RWPE1 (cell line): ENCODE measurements at regions of chr19 and their contacts with region 1.

Region 1: DNA sequence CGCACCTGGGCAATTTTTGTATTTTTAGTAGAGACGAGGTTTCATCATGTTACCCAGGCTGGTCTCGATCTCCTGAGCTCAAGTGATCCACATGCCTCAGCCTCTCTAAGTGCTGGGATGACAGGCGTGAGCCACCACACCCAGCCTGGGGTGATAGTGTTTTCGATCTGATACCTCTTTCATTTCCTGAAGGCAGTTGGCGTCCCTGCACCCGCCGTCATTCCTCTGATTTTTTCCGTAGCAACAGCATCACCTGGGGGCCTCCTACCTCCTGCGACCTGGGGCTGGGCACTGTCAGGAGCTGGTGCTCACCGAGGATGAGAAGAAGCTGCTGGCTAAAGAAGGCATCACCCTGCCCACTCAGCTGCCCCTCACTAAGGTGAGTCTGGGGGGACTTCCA is 10.8 kb downstream of the CREB3L3 start:
- DNase-seq: no peak
- H3K27ac ChIP-seq: no peak overlapping the region
- CTCF ChIP-seq: no peak

Region 2: DNA sequence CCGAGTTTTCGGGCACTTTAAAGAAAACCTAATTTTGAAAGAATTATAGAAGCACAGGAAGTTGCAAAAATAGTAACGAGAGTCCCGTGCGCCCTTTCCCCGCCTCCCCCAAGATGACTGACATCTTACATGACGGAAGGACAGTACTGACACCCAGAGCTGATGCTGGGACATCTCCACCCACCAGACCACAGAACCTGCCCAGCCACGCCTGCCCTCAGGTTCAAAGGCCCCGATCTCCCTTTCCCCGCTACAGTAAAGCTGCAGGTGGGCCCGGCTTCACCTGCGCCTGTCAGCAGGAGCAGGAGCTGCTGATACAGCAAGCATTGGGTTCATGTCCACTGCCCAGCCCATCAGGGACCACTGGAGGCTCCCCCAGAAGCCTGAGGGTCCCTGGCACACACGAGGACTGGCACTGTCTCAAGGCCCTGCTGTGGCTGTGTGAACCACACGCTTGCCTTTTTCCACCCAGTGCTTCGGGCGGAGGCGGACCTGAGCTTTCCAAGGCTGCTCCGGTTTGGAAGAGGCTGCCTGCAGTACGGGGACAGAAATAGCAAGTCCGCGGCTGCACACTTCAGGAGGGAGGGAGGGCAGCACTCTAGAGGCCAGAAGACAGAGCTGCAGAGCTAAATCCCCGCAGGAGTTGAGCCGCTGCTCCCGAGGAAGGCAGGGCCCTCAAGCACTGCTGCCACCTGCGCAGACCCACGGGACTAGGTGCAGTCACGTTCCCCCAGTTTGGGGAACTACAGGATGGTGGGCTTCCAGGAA is 49.0 kb before region 1 on chr19:
- CTCF ChIA-PET with region 1: no interaction called
- POLR2A ChIA-PET with region 1: no interaction called
- DNase-seq: no peak
- H3K27ac ChIP-seq: peak overlapping the region; percentile 24
- CTCF ChIP-seq: no peak

Region 3: DNA sequence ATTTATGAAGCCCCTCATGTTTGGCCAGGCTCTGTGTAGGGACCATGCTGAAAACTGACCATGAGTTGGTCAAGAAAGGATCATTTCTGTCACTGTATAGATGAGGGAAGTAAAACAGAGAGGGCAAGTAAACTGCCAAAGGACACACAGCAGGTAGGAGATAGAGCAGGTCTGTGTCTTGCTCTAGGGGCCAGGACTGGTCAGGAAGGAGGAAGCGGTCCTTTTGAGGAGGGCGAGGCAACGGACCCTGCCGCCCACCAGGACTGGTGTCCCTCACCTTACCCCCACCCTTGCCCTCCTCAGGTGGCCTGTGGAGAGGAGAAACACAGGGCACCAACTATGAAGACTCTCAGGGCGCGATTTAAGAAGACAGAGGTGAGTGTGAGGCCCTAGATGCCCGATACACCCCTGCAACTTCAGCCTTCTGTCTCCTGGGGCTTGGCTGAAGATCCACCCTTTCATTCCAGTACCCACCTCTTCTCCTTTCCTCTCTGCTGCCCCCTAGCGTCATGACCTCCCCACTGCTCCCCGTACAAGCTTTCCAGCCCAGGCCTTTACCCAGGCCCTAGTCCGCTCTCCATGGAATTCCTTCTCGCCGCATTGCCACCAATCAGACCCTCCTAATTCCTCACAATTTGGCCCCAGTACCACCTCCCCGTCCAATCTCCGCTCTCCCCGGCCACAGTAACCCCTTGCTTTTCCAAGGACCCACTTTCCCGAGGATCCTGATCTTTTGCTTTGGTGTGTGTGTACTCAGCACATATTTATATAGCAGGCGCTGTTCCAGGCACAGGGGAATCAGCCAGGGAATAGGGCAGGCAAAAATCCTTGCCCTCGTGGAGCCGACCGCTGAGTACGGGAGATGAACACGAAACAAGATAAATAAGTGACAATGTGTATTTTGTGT is 22.1 kb after region 1 on chr19:
- CTCF ChIA-PET with region 1: no interaction called
- POLR2A ChIA-PET with region 1: no interaction called
- DNase-seq: peak; percentile 76
- H3K27ac ChIP-seq: no peak overlapping the region
- CTCF ChIP-seq: peak; percentile 85

Region 4: DNA sequence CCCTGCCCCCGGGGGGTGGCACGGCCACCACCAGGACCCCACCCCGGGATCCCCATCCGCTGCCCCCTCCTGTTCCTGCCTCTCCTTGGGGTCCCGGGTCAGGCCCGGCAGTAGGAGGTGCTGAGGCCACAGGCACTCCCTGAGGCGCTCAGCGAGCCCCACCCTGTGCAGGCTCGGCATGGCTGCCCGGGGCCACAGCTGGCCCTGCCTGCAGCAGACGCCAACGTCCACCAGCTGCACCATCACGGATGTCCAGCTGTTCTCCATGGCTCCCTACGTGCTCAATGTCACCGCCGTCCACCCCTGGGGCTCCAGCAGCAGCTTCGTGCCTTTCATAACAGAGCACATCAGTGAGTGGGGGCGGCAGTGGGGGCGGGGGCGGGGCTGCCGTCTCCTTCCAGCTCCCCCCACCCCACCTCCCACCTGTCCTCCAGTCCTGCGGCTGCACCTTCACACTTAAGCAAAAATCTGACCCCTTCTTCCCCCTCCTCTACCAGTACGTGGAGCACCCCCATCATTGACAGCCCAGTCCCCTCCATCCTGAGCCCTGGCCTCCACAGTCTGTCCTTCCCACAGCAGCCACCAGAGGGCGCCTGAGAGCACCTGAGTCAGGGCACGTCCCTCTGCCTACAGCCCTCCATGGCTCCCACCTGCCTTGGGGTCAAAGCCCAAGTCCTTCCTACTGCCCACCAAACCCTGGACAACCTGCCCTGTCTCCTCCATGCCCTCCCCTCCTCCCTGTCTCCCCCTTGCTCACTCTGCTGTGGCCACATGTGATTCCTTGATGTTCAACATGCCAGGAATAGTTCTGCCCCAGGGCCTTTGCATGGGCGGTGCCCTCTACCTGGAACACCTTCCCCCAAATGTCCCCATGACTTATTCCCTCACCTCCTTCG is 68.9 kb after region 1 on chr19:
- CTCF ChIA-PET with region 1: no interaction called
- POLR2A ChIA-PET with region 1: interaction called, 12 read pairs
- DNase-seq: no peak
- H3K27ac ChIP-seq: no peak overlapping the region
- CTCF ChIP-seq: peak; percentile 79